ENCODE measurements at regions of chr3 and their contacts with region 1.

Region 1: GRCh38 chr3:155859859-155860258 is 5.6 kb upstream of the SLC33A1 start:
- DNase-seq: no peak
- ATAC-seq: peak; percentile 79
- H3K4me3 ChIP-seq: peak overlapping the region; percentile 4 to 39
- H3K27ac ChIP-seq: no peak overlapping the region
- H3K4me1 ChIP-seq: no peaks in the 10 kb centered on the region
- H3K27me3 ChIP-seq: no peaks in the 10 kb centered on the region
- CTCF ChIP-seq: no peak

Region 2: GRCh38 chr3:155753036-155753639 is 106.7 kb before region 1 on chr3:
- CTCF ChIA-PET with region 1: no interaction called
- POLR2A ChIA-PET with region 1: no interaction called
- in situ Hi-C with region 1: no loop called
- intact Hi-C with region 1: loop called (anchors 1 kb)
- DNase-seq: no peak
- ATAC-seq: peak; percentile 81
- H3K4me3 ChIP-seq: no peak overlapping the region
- H3K27ac ChIP-seq: no peak overlapping the region
- H3K4me1 ChIP-seq: no peaks in the 10 kb centered on the region
- H3K27me3 ChIP-seq: peaks cover 2% of the 10 kb centered on the region; the same call in 1 of the 2 replicates
- CTCF ChIP-seq: peak; percentile 78

Measured in Panc1 (cell line).